HEK293 (cell line): ENCODE measurements at regions of chr5 and their contacts with region 1.

Region 1: GRCh38 chr5:141524604-141525597 is 36.0 kb downstream of the PCDHGC5 start:
- H3K4me3 ChIP-seq: no peak overlapping the region
- H3K27ac ChIP-seq: no peak overlapping the region
- H3K4me1 ChIP-seq: peaks cover 11% of the 10 kb centered on the region
- CTCF ChIP-seq: peak; percentile 98

Region 2: DNA sequence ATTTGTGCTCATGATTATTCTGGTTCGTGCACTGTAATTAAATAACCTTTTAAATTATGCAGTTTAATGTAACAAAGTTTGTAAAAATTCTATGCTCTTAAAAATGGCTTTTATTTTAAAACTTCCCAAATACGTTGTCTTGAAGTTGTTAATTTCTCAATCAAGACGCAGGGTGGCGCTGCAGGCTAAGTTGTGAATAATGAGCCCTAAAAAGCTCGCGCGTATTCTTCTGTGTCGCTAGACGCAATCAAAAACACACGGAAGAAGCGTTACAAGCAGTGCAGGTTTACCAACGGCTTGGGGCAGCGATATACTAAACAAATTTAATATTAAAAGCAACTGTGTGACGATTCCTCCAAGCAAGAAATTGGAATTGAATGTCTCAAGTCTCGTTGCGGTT is 403.3 kb before region 1 on chr5 and contains the start of gene PCDHB4:
- CTCF ChIA-PET with region 1: no interaction called
- POLR2A ChIA-PET with region 1: no interaction called
- H3K4me3 ChIP-seq: no peak within 1 kb of the TSS
- H3K27ac ChIP-seq: no peak within 1 kb of the TSS
- H3K4me1 ChIP-seq: no peaks in the 10 kb centered on the region
- CTCF ChIP-seq: no peak

Region 3: DNA sequence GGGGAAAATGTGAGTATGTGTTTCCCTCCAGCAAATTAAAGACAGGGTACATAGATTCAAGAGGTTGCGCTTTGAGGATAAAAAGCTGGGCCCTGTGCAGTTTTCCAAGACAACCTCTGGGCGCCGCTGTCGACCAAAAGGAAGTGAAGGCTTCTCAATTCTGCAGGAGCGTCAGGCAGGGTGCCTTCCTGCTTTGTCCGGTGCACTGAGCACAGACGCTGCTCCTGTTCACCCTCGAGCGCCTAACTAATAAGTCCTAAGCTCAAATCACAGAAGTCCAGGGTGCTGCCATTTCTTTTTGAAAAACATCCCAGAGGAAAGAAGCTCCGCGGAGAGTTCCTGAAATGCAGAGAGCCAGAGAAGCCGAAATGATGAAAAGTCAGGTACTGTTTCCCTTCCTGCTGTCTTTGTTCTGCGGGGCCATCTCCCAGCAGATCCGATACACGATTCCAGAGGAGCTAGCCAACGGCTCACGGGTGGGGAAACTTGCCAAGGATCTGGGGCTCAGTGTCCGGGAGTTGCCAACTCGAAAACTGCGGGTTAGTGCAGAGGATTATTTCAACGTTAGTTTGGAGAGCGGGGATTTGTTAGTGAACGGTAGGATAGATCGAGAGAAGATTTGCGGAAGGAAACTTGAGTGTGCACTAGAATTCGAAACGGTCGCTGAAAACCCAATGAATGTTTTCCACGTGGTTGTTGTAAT is 174.8 kb before region 1 on chr5 and contains the start of gene PCDHGB1:
- CTCF ChIA-PET with region 1: interaction called, 10 read pairs
- POLR2A ChIA-PET with region 1: interaction called, 3 read pairs
- H3K4me3 ChIP-seq: peak within 1 kb of the TSS; percentile 34
- H3K27ac ChIP-seq: no peak within 1 kb of the TSS
- H3K4me1 ChIP-seq: peaks cover 2% of the 10 kb centered on the region; the same call in 1 of the 2 replicates
- CTCF ChIP-seq: peak; percentile 47; the same call in 1 of the 2 replicates

Region 4: GRCh38 chr5:141382469-141383294 is 142.2 kb before region 1 on chr5 and contains the start of gene PCDHGA7:
- CTCF ChIA-PET with region 1: no interaction called
- POLR2A ChIA-PET with region 1: no interaction called
- H3K4me3 ChIP-seq: peak within 1 kb of the TSS; percentile 40
- H3K27ac ChIP-seq: no peak within 1 kb of the TSS
- H3K4me1 ChIP-seq: no peaks in the 10 kb centered on the region
- CTCF ChIP-seq: no peak

Region 5: GRCh38 chr5:141402553-141403260 is 122.2 kb before region 1 on chr5 and contains the start of gene PCDHGA9:
- CTCF ChIA-PET with region 1: interaction called, 18 read pairs
- POLR2A ChIA-PET with region 1: no interaction called
- H3K4me3 ChIP-seq: no peak within 1 kb of the TSS
- H3K27ac ChIP-seq: no peak within 1 kb of the TSS
- H3K4me1 ChIP-seq: no peaks in the 10 kb centered on the region
- CTCF ChIP-seq: no peak

Region 6: GRCh38 chr5:141420855-141421496 is 103.9 kb before region 1 on chr5 and contains the start of gene PCDHGA11:
- CTCF ChIA-PET with region 1: interaction called, 160 read pairs
- POLR2A ChIA-PET with region 1: interaction called, 6 read pairs
- H3K4me3 ChIP-seq: peak within 1 kb of the TSS; percentile 67
- H3K27ac ChIP-seq: no peak within 1 kb of the TSS
- H3K4me1 ChIP-seq: no peaks in the 10 kb centered on the region
- CTCF ChIP-seq: peak; percentile 59

Region 7: GRCh38 chr5:141475625-141476131 is 49.2 kb before region 1 on chr5 and contains the start of gene PCDHGC3:
- CTCF ChIA-PET with region 1: interaction called, 47 read pairs
- POLR2A ChIA-PET with region 1: interaction called, 10 read pairs
- H3K4me3 ChIP-seq: peak within 1 kb of the TSS; percentile 44
- H3K27ac ChIP-seq: peak within 1 kb of the TSS; percentile 43; the same call in 1 of the 2 replicates
- H3K4me1 ChIP-seq: 0 out of 2 replicates have a peak, but pooled peaks cover 4% of the 10 kb centered on the region
- CTCF ChIP-seq: peak; percentile 59

Region 8: GRCh38 chr5:141512390-141512910 is 12.5 kb before region 1 on chr5:
- CTCF ChIA-PET with region 1: interaction called, 67 read pairs
- POLR2A ChIA-PET with region 1: no interaction called
- H3K4me3 ChIP-seq: no peak overlapping the region
- H3K27ac ChIP-seq: no peak overlapping the region
- H3K4me1 ChIP-seq: no peaks in the 10 kb centered on the region; the same call in 1 of the 2 replicates
- CTCF ChIP-seq: peak; percentile 68

Region 9: GRCh38 chr5:141650851-141651727 is 126.2 kb after region 1 on chr5 and contains the start of gene FCHSD1:
- CTCF ChIA-PET with region 1: no interaction called
- POLR2A ChIA-PET with region 1: no interaction called
- H3K4me3 ChIP-seq: peak within 1 kb of the TSS; percentile 52
- H3K27ac ChIP-seq: no peak within 1 kb of the TSS
- H3K4me1 ChIP-seq: no peaks in the 10 kb centered on the region
- CTCF ChIP-seq: no peak

Region 10: DNA sequence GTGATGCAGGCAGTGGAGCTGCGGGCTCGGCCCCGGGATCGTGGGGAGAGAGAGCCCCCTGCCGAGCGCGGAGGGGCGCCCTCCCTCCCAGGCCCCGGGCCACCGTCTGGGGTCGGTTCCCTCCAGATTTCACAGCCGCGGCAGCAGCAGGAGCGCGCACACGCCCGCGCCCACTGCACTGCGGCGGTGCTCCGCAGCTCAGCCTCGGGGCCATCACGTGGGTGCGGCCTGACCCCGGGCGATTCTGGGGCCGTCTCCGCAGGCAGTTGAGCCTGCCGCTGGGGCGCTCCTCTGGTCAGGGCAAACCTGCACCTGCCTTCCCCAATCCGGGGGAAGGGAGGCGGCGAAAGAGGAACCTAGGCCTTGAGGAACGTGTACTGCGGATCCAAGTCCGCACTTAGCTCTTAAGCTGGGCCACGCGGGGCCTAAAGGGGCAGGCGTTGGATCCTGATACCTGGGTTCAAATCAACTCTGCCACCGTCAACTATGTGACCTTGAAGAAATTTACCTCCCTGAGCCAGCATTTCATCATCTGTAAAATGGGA is 389.4 kb after region 1 on chr5:
- CTCF ChIA-PET with region 1: no interaction called
- POLR2A ChIA-PET with region 1: no interaction called
- H3K4me3 ChIP-seq: no peak overlapping the region
- H3K27ac ChIP-seq: no peak overlapping the region
- H3K4me1 ChIP-seq: no peaks in the 10 kb centered on the region
- CTCF ChIP-seq: peak; percentile 41